ENCODE measurements at regions of chr16 and their contacts with region 1.

Region 1: GRCh38 chr16:25031441-25032307 is 16.5 kb upstream of the ARHGAP17 start:
- DNase-seq: peak; percentile 69
- ATAC-seq: peak; percentile 95
- H3K4me3 Mint-ChIP-seq: peak overlapping the region; percentile 95
- H3K27ac Mint-ChIP-seq: peak overlapping the region; percentile 90
- H3K4me1 Mint-ChIP-seq: peaks cover 50% of the 10 kb centered on the region
- H3K27me3 Mint-ChIP-seq: no peaks in the 10 kb centered on the region
- CTCF ChIP-seq: no peak

Region 2: GRCh38 chr16:25045696-25046381 is 14.2 kb after region 1 on chr16:
- CTCF ChIA-PET with region 1: no interaction called
- POLR2A ChIA-PET with region 1: interaction called, 44 read pairs
- intact Hi-C with region 1: loop called (anchors 1 kb)
- DNase-seq: no peak
- ATAC-seq: no peak
- H3K4me3 Mint-ChIP-seq: no peak overlapping the region
- H3K27ac Mint-ChIP-seq: no peak overlapping the region
- H3K4me1 Mint-ChIP-seq: peaks cover 62% of the 10 kb centered on the region
- H3K27me3 Mint-ChIP-seq: no peaks in the 10 kb centered on the region
- CTCF ChIP-seq: no peak

Region 3: GRCh38 chr16:25066747-25067631 is 35.3 kb after region 1 on chr16:
- CTCF ChIA-PET with region 1: no interaction called
- POLR2A ChIA-PET with region 1: interaction called, 6 read pairs
- intact Hi-C with region 1: loop called (anchors 1 kb)
- DNase-seq: peak; percentile 78
- ATAC-seq: peak; percentile 94
- H3K4me3 Mint-ChIP-seq: peak overlapping the region; percentile 90
- H3K27ac Mint-ChIP-seq: peak overlapping the region; percentile 90
- H3K4me1 Mint-ChIP-seq: peaks cover 55% of the 10 kb centered on the region
- H3K27me3 Mint-ChIP-seq: no peaks in the 10 kb centered on the region
- CTCF ChIP-seq: no peak